WTC11 (cell line): ENCODE measurements at regions of chr1 and their contacts with region 1.

Region 1: DNA sequence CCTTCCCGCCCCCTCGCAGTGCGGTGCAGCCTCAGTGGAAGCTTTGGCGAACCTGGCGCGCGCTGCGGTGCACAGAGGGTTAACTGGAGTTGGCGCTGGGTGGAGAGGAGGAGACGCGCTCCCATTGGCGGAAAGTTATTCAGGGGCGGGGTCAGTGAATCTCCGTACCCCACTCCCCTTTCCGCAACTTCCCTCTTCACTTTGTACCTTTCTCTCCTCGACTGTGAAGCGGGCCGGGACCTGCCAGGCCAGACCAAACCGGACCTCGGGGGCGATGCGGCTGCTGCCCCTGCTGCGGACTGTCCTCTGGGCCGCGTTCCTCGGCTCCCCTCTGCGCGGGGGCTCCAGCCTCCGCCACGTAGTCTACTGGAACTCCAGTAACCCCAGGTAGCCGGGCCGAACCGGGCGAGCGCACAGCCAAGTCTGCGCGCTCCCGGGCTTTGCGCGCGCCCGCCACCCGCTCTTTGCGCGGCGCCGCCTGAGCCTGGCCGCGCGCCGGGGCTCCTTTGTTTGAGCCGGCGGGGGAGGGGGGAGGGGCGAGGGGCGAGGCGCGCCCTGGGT is at the start of gene EFNA4:
- DNase-seq: peak; percentile 93
- ATAC-seq: peak; percentile 74
- H3K4me3 Mint-ChIP-seq: peak within 1 kb of the TSS; percentile 91
- H3K27ac Mint-ChIP-seq: peak within 1 kb of the TSS; percentile 98
- H3K4me1 Mint-ChIP-seq: peaks cover 19% of the 10 kb centered on the region
- H3K27me3 Mint-ChIP-seq: no peaks in the 10 kb centered on the region
- CTCF ChIP-seq: no peak
- total RNA-seq, gene EFNA4: 19.5 to 22.7 TPM (median 22.3 TPM) in 3 replicates

Region 2: GRCh38 chr1:154961497-154962262 is 102.0 kb before region 1 on chr1 and contains the start of gene PYGO2:
- CTCF ChIA-PET with region 1: interaction called, 13 read pairs
- POLR2A ChIA-PET with region 1: no interaction called
- DNase-seq: peak; percentile 83
- ATAC-seq: peak; percentile 66
- H3K4me3 Mint-ChIP-seq: peak within 1 kb of the TSS; percentile 93
- H3K27ac Mint-ChIP-seq: peak within 1 kb of the TSS; percentile 91
- H3K4me1 Mint-ChIP-seq: peaks cover 32% of the 10 kb centered on the region
- H3K27me3 Mint-ChIP-seq: no peaks in the 10 kb centered on the region
- CTCF ChIP-seq: no peak
- total RNA-seq, gene PYGO2: 37.4 to 38.8 TPM (median 38.0 TPM) in 3 replicates

Region 3: DNA sequence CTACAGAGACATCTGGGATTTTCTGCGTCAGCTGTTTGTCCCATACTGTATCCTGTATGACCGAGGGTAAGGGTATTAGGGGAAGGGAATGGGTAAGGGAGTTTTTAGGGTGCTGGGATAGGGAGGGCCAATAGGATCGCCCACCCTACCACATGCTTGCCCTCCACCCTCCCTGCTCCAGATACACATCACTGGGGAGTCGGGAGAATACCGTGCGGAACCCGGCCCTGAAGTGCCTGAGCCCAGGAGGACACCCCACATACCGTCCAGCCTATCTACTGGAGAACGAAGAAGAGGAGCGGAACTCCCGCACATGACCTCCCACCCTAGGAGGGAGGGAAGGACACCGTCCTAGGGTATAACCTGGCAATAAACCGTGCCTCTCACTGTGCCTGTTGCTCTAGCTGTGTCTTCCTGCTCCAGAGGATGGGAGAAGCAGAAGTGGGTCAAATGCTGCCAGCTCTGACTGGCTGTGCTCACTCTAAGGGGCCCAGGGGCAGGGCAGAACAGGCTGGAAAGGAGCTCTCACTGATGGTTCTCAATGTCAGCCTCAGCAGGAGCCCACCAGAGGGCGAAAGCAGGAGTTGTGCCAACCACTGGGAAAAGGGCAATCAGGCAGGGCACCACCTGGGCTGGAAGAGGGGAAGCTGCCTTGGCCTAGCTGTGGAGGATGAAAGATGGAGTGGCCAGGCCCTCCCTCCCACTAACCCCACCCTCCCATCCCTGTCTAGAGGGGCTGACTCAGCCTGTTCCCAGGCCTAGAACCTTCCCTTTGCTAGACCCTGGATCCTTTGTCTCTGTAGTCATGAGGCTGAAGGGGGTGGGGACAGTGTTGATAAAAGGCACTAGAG is 70.7 kb before region 1 on chr1:
- CTCF ChIA-PET with region 1: interaction called, 38 read pairs
- POLR2A ChIA-PET with region 1: no interaction called
- DNase-seq: no peak
- ATAC-seq: peak; percentile 56
- H3K4me3 Mint-ChIP-seq: no peak overlapping the region
- H3K27ac Mint-ChIP-seq: peak overlapping the region; percentile 70
- H3K4me1 Mint-ChIP-seq: peaks cover 11% of the 10 kb centered on the region; the same call in 1 of the 2 replicates
- H3K27me3 Mint-ChIP-seq: no peaks in the 10 kb centered on the region; the same call in 1 of the 2 replicates
- CTCF ChIP-seq: no peak

Region 4: DNA sequence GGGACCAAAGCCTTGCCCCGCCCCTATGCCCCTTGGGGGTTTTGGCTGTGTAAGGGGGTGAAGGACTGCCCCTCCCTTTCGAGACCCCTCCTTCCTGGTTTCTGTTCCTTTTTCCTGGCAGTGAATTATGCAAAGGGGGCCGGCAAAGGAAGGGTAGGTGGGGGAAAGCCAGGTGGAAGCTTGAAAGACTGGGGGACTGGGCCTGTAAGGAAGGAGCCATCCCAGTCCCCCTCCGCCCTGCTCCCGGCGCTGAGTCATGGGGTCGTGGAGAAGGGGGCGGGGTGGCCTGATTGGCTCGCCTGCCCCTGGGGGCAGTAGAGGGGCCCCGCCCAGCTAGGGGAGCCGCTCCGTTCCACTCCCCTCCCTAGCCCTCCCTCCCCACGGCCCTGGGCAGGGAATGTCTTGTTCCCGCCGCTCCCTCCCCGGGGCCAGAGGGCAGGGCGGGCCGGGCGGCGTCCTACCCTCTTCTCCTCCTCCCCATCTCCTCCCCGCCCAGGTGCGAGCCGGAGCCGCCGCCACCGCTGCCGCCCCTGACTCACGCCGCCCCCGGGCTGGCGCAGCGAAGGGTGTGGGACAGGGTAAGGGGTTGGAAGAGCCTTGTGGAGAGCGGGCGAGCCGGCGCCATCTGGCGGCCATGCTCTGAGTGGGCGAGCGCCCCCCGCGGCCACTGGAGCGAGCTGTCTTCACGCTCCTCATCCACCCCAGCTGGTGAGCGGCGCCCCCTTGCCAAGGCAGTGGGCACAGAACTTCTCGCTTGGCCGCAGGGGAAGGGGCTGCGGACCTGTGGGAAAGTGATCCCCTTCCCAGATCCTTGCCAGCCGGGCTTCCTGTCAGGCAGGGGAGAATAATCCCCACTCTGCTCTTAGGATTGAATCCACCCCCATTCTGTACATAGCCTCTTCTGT is 46.3 kb before region 1 on chr1:
- CTCF ChIA-PET with region 1: interaction called, 73 read pairs
- POLR2A ChIA-PET with region 1: interaction called, 6 read pairs
- DNase-seq: peak; percentile 93
- ATAC-seq: peak; percentile 88
- H3K4me3 Mint-ChIP-seq: peak overlapping the region; percentile 62
- H3K27ac Mint-ChIP-seq: peak overlapping the region; percentile 70
- H3K4me1 Mint-ChIP-seq: peaks cover 46% of the 10 kb centered on the region
- H3K27me3 Mint-ChIP-seq: peaks cover 4% of the 10 kb centered on the region; the same call in 1 of the 2 replicates
- CTCF ChIP-seq: peak; percentile 84

Region 5: GRCh38 chr1:155050560-155051341 is 12.9 kb before region 1 on chr1 and contains the start of gene ADAM15:
- CTCF ChIA-PET with region 1: interaction called, 176 read pairs
- POLR2A ChIA-PET with region 1: interaction called, 4 read pairs
- DNase-seq: peak; percentile 92
- ATAC-seq: peak; percentile 72
- H3K4me3 Mint-ChIP-seq: peak within 1 kb of the TSS; percentile 82
- H3K27ac Mint-ChIP-seq: peak within 1 kb of the TSS; percentile 72; the same call in 1 of the 2 replicates
- H3K4me1 Mint-ChIP-seq: peaks cover 33% of the 10 kb centered on the region
- H3K27me3 Mint-ChIP-seq: peaks cover 20% of the 10 kb centered on the region
- CTCF ChIP-seq: peak; percentile 97
- total RNA-seq, gene ADAM15: 32.1 to 38.4 TPM (median 33.2 TPM) in 3 replicates

Region 6: GRCh38 chr1:155091071-155091709 is 27.6 kb after region 1 on chr1:
- CTCF ChIA-PET with region 1: interaction called, 156 read pairs
- POLR2A ChIA-PET with region 1: no interaction called
- DNase-seq: peak; percentile 94
- ATAC-seq: peak; percentile 80
- H3K4me3 Mint-ChIP-seq: peak overlapping the region; percentile 32
- H3K27ac Mint-ChIP-seq: no peak overlapping the region
- H3K4me1 Mint-ChIP-seq: peaks cover 30% of the 10 kb centered on the region
- H3K27me3 Mint-ChIP-seq: peaks cover 12% of the 10 kb centered on the region
- CTCF ChIP-seq: peak; percentile 99

Region 7: GRCh38 chr1:155172732-155173477 is 109.3 kb after region 1 on chr1 and contains the start of gene KRTCAP2:
- CTCF ChIA-PET with region 1: interaction called, 57 read pairs
- POLR2A ChIA-PET with region 1: no interaction called
- DNase-seq: peak; percentile 97
- ATAC-seq: peak; percentile 64
- H3K4me3 Mint-ChIP-seq: peak within 1 kb of the TSS; percentile 94
- H3K27ac Mint-ChIP-seq: peak within 1 kb of the TSS; percentile 95
- H3K4me1 Mint-ChIP-seq: peaks cover 29% of the 10 kb centered on the region
- H3K27me3 Mint-ChIP-seq: no peaks in the 10 kb centered on the region
- CTCF ChIP-seq: peak; percentile 88
- total RNA-seq, gene KRTCAP2: 104 to 161 TPM (median 147 TPM) in 3 replicates